Aorta (tissue), 5 donors: ENCODE measurements at regions of chr2 and their contacts with region 1.

Region 1: GRCh38 chr2:240586198-240586918 is at the start of gene CAPN10:
- DNase-seq: peak; percentile 99 to 100
- ATAC-seq: peak; percentile 99
- H3K4me3 ChIP-seq: peak within 1 kb of the TSS; percentile 80 to 85
- H3K27ac ChIP-seq: peak within 1 kb of the TSS in 1 of 2 donors; percentile 87
- H3K4me1 ChIP-seq: no peaks in the 10 kb centered on the region
- H3K27me3 ChIP-seq: no peaks in the 10 kb centered on the region
- total RNA-seq, gene CAPN10: 23.7 to 35.5 TPM

Region 2: GRCh38 chr2:240560480-240561326 is 25.7 kb before region 1 on chr2:
- intact Hi-C with region 1: loop called in 1 of 2 experiments (anchors 2 kb)
- DNase-seq: peak; percentile 100
- ATAC-seq: peak; percentile 94
- H3K4me3 ChIP-seq: peak overlapping the region; percentile 67 to 71
- H3K27ac ChIP-seq: peak overlapping the region; percentile 83 to 87
- H3K4me1 ChIP-seq: peaks cover 0 to under 1% of the 10 kb centered on the region in 2 donors
- H3K27me3 ChIP-seq: no peaks in the 10 kb centered on the region

Region 3: GRCh38 chr2:240567872-240568677 is 18.3 kb before region 1 on chr2 and contains the start of gene RNPEPL1:
- intact Hi-C with region 1: loop called in 1 of 2 experiments (anchors 2 kb)
- DNase-seq: peak; percentile 60 to 85
- ATAC-seq: no peak
- H3K4me3 ChIP-seq: peak within 1 kb of the TSS; percentile 19 to 78
- H3K27ac ChIP-seq: peak within 1 kb of the TSS in 1 of 2 donors; percentile 78
- H3K4me1 ChIP-seq: peaks cover 0 to 4% of the 10 kb centered on the region in 2 donors
- H3K27me3 ChIP-seq: no peaks in the 10 kb centered on the region
- total RNA-seq, gene RNPEPL1: 42.9 to 46.9 TPM

Region 4: GRCh38 chr2:240749516-240749915 is 163.2 kb after region 1 on chr2:
- intact Hi-C with region 1: no loop called
- DNase-seq: no peak
- ATAC-seq: no peak
- H3K4me3 ChIP-seq: no peak overlapping the region
- H3K27ac ChIP-seq: no peak overlapping the region
- H3K4me1 ChIP-seq: no peaks in the 10 kb centered on the region
- H3K27me3 ChIP-seq: no peaks in the 10 kb centered on the region